ENCODE measurements at regions of chr9 and their contacts with region 1.

Region 1: GRCh38 chr9:70352802-70353201 is 61.7 kb downstream of the KLF9 start:
- DNase-seq: no peak
- ATAC-seq: peak in 1 of 2 donors; percentile 64
- H3K4me3 ChIP-seq: no peak overlapping the region
- H3K27ac ChIP-seq: no peak overlapping the region
- H3K4me1 ChIP-seq: no peaks in the 10 kb centered on the region
- H3K27me3 ChIP-seq: no peaks in the 10 kb centered on the region

Region 2: GRCh38 chr9:70406434-70406862 is 53.6 kb after region 1 on chr9:
- intact Hi-C with region 1: loop called in 3 of 4 experiments (anchors 5 to 10 kb)
- DNase-seq: peak in 1 of 3 donors; percentile 49
- ATAC-seq: no peak
- H3K4me3 ChIP-seq: peak overlapping the region; percentile 42
- H3K27ac ChIP-seq: peak overlapping the region; percentile 93
- H3K4me1 ChIP-seq: peaks cover 32% of the 10 kb centered on the region
- H3K27me3 ChIP-seq: no peaks in the 10 kb centered on the region

Region 3: DNA sequence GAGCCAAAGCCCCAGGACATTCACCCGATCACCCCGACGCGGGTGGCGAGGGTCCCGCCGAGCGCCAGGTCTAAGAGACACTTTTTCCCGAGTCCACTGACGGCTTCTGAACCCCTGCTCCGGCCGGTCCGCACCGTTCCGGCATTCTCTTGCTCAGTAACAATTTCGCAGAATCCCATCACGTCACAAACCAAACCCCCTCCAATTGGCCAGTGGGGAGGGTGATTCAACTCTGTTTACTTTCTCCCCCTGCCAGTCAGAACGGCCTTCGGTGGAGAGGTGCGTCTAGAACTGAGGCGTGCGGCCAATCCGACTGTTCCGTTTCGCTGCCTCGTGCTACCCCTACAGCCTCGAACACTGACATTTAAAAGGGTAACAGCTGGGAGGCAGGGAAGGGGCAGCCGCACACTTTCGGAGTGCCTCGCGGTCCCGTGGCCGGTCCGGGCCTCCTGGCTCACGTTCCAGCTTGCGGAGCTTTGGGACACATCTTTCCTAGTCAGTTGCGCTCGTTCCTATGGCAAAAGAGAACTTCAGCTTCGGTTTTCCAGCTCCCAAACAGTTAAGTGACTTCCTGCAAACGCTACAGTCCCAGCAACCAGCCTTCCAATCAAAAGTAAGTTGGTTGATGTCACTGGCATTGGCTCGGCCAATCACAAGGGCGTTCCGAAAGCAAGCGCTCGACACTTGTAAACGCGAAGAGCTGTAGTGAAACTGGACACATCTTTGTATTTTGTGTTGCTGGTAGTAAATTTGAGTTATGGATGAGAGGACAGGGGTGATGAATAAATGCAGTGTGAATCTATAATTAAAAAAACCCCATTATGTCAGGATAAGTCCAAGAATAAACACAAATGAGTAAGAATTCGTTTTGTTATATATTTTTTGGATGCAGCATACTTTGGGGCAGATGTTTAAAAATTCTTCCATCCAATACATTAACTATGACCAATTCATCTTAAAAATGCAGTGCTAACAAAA is 61.3 kb after region 1 on chr9 and contains the start of gene KLF9:
- intact Hi-C with region 1: loop called in 3 of 4 experiments (anchors 5 to 10 kb)
- DNase-seq: peak; percentile 94 to 97 (median 96)
- ATAC-seq: peak; percentile 83
- H3K4me3 ChIP-seq: peak within 1 kb of the TSS; percentile 50
- H3K27ac ChIP-seq: peak within 1 kb of the TSS; percentile 95
- H3K4me1 ChIP-seq: peaks cover 2% of the 10 kb centered on the region
- H3K27me3 ChIP-seq: no peaks in the 10 kb centered on the region
- total RNA-seq, gene KLF9: 59.3 to 76.6 (median 72.6) TPM

Region 4: GRCh38 chr9:70451765-70452164 is 99.0 kb after region 1 on chr9:
- intact Hi-C with region 1: no loop called
- DNase-seq: no peak
- ATAC-seq: no peak
- H3K4me3 ChIP-seq: no peak overlapping the region
- H3K27ac ChIP-seq: no peak overlapping the region
- H3K4me1 ChIP-seq: peaks cover 9% of the 10 kb centered on the region
- H3K27me3 ChIP-seq: no peaks in the 10 kb centered on the region

Region 5: DNA sequence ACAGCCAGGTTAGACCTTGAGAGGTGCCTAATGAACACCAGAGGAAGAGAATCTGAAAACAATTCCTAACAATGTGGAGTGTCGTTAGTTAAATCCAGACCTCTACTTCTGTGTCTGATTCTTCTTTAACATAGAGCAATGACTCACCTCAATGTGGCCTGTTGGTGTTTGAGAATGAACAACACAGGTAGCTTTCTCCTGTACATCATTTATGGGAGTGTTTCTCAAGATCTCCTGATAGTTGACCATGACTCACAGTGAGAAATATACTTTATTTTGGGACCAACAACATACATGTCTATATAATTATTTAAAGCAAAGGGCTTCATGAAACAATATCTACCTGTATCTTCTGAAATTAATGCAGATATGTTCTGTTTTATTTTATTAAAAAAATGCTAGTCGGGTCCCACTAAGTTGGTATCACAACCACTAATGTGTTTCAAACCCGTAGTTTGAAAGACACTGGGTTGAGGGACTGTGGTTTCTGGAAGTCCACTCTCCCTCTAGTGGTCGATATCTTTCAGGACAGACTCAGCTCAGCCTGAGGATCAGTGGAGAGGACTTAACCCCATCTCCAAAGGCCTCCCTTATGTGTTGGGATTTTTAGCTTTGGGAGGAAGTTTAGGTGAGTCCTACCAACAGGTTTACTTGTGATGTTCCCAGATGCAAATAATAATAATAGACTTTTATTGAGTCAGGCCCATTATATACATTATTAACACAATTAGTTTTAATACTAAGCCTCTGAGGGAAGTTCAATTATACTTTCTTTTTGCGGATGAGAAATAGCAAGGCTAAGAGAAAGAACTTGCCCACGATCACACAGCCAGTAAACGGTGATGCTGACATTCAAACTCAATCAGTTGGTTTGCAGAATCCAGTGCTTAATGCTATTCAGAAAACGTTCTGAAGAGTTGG is 131.7 kb after region 1 on chr9:
- intact Hi-C with region 1: loop called in 2 of 4 experiments (anchors 10 kb)
- DNase-seq: no peak
- ATAC-seq: peak; percentile 59 to 75
- H3K4me3 ChIP-seq: no peak overlapping the region
- H3K27ac ChIP-seq: peak overlapping the region; percentile 74
- H3K4me1 ChIP-seq: peaks cover 35% of the 10 kb centered on the region
- H3K27me3 ChIP-seq: no peaks in the 10 kb centered on the region

Region 6: GRCh38 chr9:70494221-70494620 is 141.4 kb after region 1 on chr9:
- intact Hi-C with region 1: loop called in 3 of 4 experiments (anchors 10 kb)
- DNase-seq: no peak
- ATAC-seq: peak; percentile 20 to 28
- H3K4me3 ChIP-seq: no peak overlapping the region
- H3K27ac ChIP-seq: peak overlapping the region; percentile 64
- H3K4me1 ChIP-seq: peaks cover 24% of the 10 kb centered on the region
- H3K27me3 ChIP-seq: no peaks in the 10 kb centered on the region

Region 7: GRCh38 chr9:70534061-70534460 is 181.3 kb after region 1 on chr9:
- intact Hi-C with region 1: no loop called
- DNase-seq: no peak
- ATAC-seq: no peak
- H3K4me3 ChIP-seq: no peak overlapping the region
- H3K27ac ChIP-seq: no peak overlapping the region
- H3K4me1 ChIP-seq: no peaks in the 10 kb centered on the region
- H3K27me3 ChIP-seq: no peaks in the 10 kb centered on the region

Region 8: GRCh38 chr9:70602321-70603019 is 249.7 kb after region 1 on chr9:
- intact Hi-C with region 1: loop called (anchors 2 to 5 kb)
- DNase-seq: peak; percentile 52 to 73 (median 56)
- ATAC-seq: peak; percentile 55 to 62
- H3K4me3 ChIP-seq: peak overlapping the region; percentile 30
- H3K27ac ChIP-seq: peak overlapping the region; percentile 94
- H3K4me1 ChIP-seq: peaks cover 13% of the 10 kb centered on the region
- H3K27me3 ChIP-seq: no peaks in the 10 kb centered on the region

Measured in right cardiac atrium (tissue), 5 donors.